ENCODE measurements at regions of chr19 and their contacts with region 1.

Region 1: DNA sequence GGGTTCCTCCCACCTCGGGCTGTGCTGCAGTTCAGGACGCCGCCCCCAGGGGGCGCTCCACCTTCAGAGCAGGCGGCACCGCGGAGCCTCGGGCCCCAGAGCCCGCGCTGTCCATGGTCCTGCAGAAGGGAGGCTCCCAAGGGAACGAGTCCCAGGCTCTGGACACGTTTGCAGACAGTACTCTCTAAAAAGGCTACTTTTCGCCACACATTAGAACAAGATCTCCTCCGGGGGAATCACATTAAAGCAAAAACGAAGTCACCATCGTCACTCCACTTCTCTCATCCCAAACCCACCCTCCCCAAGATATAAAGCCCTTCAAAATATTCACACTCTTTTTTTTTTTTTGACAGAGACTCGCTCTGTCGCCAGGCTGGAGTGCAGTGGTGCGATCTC is 4.6 kb upstream of the SIGLEC10 start:
- DNase-seq: peak; percentile 91
- H3K4me3 Mint-ChIP-seq: no peak overlapping the region
- H3K27ac Mint-ChIP-seq: no peak overlapping the region
- H3K4me1 Mint-ChIP-seq: peaks cover 18% of the 10 kb centered on the region
- H3K27me3 Mint-ChIP-seq: peaks cover 18% of the 10 kb centered on the region

Region 2: DNA sequence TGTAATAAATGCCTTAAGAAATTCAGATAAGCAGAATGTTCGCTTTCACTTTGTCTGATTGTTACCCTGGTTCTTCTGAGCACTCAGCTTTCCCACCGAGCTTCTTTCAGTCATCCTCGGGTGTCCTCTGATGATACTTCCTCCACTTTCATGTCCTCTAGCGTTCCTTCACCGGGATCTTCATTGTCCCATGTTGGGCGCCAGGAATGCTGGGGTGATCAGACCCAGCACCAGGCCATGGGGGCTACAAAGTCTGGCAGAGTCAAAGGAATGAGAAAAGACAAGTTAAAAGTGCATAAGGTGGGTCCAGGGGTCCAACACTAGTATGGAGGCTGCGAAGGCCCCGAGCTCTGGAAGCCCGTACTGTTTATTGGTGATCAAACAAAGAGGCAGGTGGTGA is 19.9 kb before region 1 on chr19:
- CTCF ChIA-PET with region 1: interaction called, 24 read pairs
- POLR2A ChIA-PET with region 1: no interaction called
- intact Hi-C with region 1: no loop called
- DNase-seq: no peak
- H3K4me3 Mint-ChIP-seq: no peak overlapping the region
- H3K27ac Mint-ChIP-seq: no peak overlapping the region
- H3K4me1 Mint-ChIP-seq: peaks cover 3% of the 10 kb centered on the region
- H3K27me3 Mint-ChIP-seq: no peaks in the 10 kb centered on the region

Region 3: DNA sequence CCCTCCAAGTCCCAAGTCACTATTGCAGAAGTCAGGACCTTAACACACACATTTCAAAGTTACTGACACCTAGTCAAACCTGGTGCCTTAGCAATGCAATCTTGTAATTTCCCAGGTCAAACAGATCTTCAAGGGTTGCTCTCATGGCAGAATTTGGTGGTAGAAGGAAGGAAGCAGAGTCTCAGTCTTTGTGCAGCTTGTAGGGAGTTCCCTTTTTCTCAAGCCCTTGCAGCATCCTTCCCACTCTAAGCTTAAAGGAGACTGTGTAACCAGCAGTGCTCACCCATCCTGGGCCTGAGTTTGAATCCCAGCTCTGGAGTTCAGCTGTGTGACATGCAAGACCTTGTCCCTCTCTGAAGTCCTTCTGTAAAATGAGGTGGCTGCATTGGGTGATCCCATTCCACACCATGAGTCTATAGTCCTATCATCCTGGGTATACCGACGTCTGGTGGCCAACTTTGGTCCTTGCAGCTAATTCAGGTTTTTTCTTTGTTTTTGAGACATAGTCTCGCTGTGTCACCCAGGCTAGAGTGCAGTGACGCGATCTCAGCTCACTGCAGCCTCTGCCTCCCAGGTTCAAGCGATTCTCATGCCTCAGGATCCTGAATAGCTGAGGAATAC is 14.4 kb before region 1 on chr19:
- CTCF ChIA-PET with region 1: interaction called, 13 read pairs
- POLR2A ChIA-PET with region 1: no interaction called
- intact Hi-C with region 1: no loop called
- DNase-seq: peak; percentile 56
- H3K4me3 Mint-ChIP-seq: no peak overlapping the region
- H3K27ac Mint-ChIP-seq: no peak overlapping the region
- H3K4me1 Mint-ChIP-seq: peaks cover 7% of the 10 kb centered on the region
- H3K27me3 Mint-ChIP-seq: peaks cover 5% of the 10 kb centered on the region

Region 4: DNA sequence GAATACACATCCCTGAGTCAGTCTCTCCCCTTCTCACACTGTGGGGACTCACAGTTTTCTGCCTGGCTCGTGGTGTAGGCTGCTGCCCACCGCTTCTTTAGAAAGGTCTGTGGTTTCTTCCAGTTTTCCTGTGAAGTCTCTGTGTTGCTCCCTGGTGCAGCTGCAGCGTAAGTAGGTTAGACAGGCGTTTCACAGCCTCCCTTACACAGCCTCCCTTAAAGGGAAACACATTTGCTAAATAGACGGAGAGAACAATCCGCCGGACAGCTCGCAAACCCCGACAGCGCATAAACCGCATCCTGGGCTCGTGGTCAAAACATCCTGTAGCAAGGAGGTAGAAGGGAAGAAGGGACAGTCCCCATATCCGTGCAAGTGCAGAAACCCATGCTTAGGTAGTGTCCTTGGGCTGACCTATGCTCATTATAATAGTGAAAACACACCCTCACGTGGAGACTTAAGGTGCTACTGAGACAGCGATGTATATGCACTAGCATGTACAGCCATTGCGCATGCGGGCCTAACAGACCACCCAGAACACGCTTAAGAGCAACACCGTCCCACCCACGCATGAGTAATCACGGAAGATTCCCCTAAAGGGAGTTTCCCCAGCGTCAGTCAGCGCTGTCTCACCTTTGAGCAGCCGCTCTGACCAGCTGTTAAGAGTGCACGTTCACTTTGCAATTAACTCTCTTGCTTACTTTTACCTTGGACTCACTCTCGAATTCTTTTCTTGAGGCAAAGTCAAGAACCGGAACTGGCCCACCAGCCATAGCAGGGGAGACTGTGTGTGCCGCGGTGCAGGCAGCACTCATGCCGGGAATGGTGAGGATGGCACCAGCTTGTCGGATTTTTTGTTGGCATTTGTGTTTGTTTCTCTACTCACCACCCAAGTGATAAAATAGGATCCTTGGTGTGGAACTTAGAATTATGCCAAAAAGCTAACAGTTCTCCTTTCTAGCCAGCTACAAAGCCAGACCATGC is 19.6 kb after region 1 on chr19:
- CTCF ChIA-PET with region 1: interaction called, 55 read pairs
- POLR2A ChIA-PET with region 1: interaction called, 4 read pairs
- intact Hi-C with region 1: loop called (anchors 1 kb)
- DNase-seq: peak; percentile 97
- H3K4me3 Mint-ChIP-seq: peak overlapping the region; percentile 81
- H3K27ac Mint-ChIP-seq: peak overlapping the region; percentile 97
- H3K4me1 Mint-ChIP-seq: peaks cover 60% of the 10 kb centered on the region
- H3K27me3 Mint-ChIP-seq: peaks cover 2% of the 10 kb centered on the region

Region 5: GRCh38 chr19:51514866-51515481 is 92.9 kb after region 1 on chr19:
- CTCF ChIA-PET with region 1: interaction called, 74 read pairs
- POLR2A ChIA-PET with region 1: interaction called, 4 read pairs
- intact Hi-C with region 1: loop called (anchors 1 kb)
- DNase-seq: peak; percentile 28
- H3K4me3 Mint-ChIP-seq: no peak overlapping the region
- H3K27ac Mint-ChIP-seq: no peak overlapping the region
- H3K4me1 Mint-ChIP-seq: peaks cover 12% of the 10 kb centered on the region
- H3K27me3 Mint-ChIP-seq: peaks cover 25% of the 10 kb centered on the region

Region 6: GRCh38 chr19:51637362-51637978 is 215.4 kb after region 1 on chr19:
- CTCF ChIA-PET with region 1: interaction called, 10 read pairs
- POLR2A ChIA-PET with region 1: no interaction called
- intact Hi-C with region 1: no loop called
- DNase-seq: no peak
- H3K4me3 Mint-ChIP-seq: no peak overlapping the region
- H3K27ac Mint-ChIP-seq: no peak overlapping the region
- H3K4me1 Mint-ChIP-seq: no peaks in the 10 kb centered on the region
- H3K27me3 Mint-ChIP-seq: peaks cover 29% of the 10 kb centered on the region

Region 7: GRCh38 chr19:51651216-51651846 is 229.3 kb after region 1 on chr19:
- CTCF ChIA-PET with region 1: interaction called, 5 read pairs
- POLR2A ChIA-PET with region 1: no interaction called
- intact Hi-C with region 1: loop called (anchors 5 kb)
- DNase-seq: no peak
- H3K4me3 Mint-ChIP-seq: no peak overlapping the region
- H3K27ac Mint-ChIP-seq: no peak overlapping the region
- H3K4me1 Mint-ChIP-seq: no peaks in the 10 kb centered on the region
- H3K27me3 Mint-ChIP-seq: peaks cover 15% of the 10 kb centered on the region

Measured in activated CD4-positive, alpha-beta memory T cell treated with anti-CD3 and anti-CD28 coated beads for 36 hours (primary cell).